ENCODE measurements at regions of chr1 and their contacts with region 1.

Region 1: DNA sequence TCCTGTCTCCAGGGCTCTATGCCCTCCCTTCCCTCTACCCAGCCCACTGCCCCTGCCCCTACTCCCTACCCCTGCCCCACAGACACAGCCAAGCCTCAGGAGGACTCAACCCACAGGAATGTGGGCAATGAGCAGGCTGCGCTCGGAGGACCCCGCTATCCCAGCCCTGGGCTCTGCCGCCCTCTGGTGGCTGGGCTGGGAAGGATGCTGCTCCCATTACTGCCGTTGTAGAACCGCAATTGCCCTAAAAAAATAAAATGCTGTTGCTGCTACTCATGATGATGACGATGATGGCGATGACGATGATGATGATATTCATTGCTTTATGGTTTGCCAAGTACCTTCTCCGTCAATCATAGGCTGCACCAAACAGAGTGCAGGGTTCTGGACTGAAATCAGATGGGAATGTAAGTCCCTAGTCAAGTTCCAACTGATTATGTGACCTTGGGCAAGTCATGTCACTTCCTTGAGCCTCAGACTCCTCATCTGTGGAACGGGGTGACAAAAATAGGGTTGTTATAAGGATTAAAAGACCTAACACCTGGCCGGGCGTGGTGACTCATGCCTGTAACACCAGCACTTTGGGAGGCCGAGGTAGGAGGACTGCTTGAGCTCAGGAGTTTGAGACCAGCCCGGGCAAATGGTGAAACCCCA is 24.6 kb downstream of the ARHGEF19 start:
- DNase-seq: no peak
- H3K4me3 ChIP-seq: no peak overlapping the region
- CTCF ChIP-seq: peak; percentile 97

Region 2: GRCh38 chr1:16155532-16156410 is 32.1 kb before region 1 on chr1 and contains the start of gene EPHA2:
- CTCF ChIA-PET with region 1: interaction called, 12 read pairs
- POLR2A ChIA-PET with region 1: no interaction called
- DNase-seq: no peak
- H3K4me3 ChIP-seq: peak within 1 kb of the TSS; percentile 84
- CTCF ChIP-seq: no peak

Region 3: GRCh38 chr1:16204634-16205337 is 16.9 kb after region 1 on chr1:
- CTCF ChIA-PET with region 1: interaction called, 73 read pairs
- POLR2A ChIA-PET with region 1: interaction called, 3 read pairs
- DNase-seq: no peak
- H3K4me3 ChIP-seq: no peak overlapping the region
- CTCF ChIP-seq: peak; percentile 40